ENCODE measurements at regions of chr10 and their contacts with region 1.

Region 1: DNA sequence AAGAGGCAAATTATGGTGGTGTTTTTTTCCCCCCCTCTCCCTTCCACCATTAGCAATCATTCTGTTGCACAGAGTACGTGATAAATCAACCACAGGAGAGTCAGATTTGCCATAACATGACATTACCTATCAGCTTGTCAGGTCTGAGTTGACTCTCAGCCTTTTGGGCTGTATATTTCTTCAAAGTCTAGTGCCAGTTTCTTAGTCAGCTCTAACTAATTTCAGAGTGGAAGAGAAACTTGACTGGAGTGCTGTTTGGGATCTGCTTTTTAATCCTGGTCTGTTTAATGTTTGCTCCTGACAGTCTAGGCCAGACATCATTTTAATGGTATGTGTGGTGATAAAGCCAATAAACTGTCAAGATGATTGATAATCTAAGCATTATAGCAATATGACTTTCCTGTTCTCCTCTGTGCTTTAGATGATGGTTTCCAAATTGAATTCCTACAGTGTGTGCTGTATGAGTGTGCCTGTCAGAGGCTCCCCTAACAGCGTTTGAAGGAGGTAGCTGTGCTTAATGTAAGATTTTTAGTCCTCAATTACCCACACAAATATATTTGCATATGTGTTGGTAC is 76.9 kb downstream of the LRMDA start:
- DNase-seq: peak; percentile 56

Region 2: GRCh38 chr10:75408911-75409885 is 99.1 kb before region 1 on chr10:
- CTCF ChIA-PET with region 1: no interaction called
- POLR2A ChIA-PET with region 1: interaction called, 11 read pairs
- DNase-seq: peak; percentile 73

Region 3: GRCh38 chr10:75431180-75432111 is 76.9 kb before region 1 on chr10 and contains the start of gene LRMDA:
- CTCF ChIA-PET with region 1: interaction called, 3 read pairs
- POLR2A ChIA-PET with region 1: interaction called, 11 read pairs
- DNase-seq: no peak

Region 4: DNA sequence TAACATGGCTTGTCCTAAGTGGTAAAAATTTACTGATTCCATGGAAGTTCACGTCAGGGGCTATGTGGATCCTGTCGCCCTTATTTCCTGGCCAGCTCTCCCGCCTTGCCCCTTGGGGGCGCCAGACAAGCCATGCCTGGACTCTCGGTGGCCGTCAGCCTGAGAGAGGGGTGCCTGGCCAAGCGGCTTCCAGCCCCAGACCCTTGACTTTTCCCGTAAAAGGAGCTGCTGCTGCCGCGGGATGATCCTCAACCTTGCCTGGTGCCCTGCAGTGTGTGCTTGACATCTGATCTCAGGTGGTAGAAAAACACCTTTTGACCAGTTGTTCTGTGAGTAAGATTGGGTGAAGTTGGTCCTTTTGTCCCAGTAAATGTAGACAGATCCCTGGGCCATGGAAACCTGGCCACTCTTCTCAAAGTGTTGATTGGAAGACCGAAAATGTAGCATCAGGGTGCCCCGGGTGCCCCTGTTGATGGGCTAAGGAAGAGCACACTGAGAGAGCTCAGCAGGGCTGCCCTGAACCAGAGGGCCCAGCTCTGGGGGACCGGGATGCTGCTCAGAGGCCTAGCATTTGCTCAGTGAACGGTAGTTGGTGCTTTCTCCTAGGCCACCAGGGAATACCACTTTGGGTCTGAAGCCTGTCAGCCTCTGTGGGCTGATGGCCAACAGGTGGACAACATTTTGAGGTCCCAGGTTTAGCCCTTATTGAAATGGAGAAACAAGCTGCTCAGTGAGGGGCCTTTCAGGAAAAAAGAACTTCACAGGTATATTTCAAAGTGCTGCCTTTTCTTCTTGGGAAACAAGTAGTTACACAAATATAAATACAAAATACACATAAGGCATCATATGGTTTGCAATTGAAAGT is 85.6 kb after region 1 on chr10:
- CTCF ChIA-PET with region 1: interaction called, 5 read pairs
- POLR2A ChIA-PET with region 1: interaction called, 18 read pairs
- DNase-seq: peak; percentile 73